OCI-LY7 (cell line): ENCODE measurements at regions of chr1 and their contacts with region 1.

Region 1: GRCh38 chr1:113401067-113401466 is 10.8 kb downstream of the MAGI3 start:
- DNase-seq: no peak
- H3K4me3 ChIP-seq: no peak overlapping the region
- H3K27ac ChIP-seq: no peak overlapping the region
- H3K4me1 ChIP-seq: no peaks in the 10 kb centered on the region
- CTCF ChIP-seq: no peak

Region 2: DNA sequence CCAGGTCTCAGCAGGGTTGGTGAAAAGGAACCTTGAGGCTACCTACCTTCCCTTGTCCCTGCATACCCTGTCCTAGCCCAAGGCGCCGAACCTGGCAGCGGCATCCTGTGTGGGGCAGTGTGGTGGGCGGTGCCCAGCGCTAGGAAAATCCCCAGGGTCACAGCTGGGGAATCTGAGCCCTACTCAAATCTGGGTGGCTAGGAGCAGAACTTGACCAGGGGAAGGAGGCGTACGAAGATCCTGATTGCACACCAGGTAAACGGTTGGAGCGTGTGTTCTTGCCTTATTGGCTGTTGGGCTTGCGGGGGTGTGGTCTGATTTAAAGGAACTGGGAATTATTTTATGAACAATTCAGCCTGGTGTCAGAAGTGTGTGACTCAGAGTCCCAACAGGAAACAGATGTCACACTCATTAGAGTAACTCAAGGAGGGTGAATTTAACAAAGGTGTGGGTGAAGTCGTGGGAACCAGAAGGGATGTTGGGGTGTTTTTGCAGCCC is 209.4 kb before region 1 on chr1:
- CTCF ChIA-PET with region 1: no interaction called
- POLR2A ChIA-PET with region 1: no interaction called
- intact Hi-C with region 1: no loop called
- DNase-seq: no peak
- H3K4me3 ChIP-seq: no peak overlapping the region
- H3K27ac ChIP-seq: no peak overlapping the region
- H3K4me1 ChIP-seq: no peaks in the 10 kb centered on the region
- CTCF ChIP-seq: no peak

Region 3: GRCh38 chr1:113389953-113390834 is 10.9 kb before region 1 on chr1 and contains the start of gene MAGI3:
- CTCF ChIA-PET with region 1: no interaction called
- POLR2A ChIA-PET with region 1: interaction called, 12 read pairs
- intact Hi-C with region 1: no loop called
- DNase-seq: peak; percentile 94
- H3K4me3 ChIP-seq: peak within 1 kb of the TSS; percentile 85
- H3K27ac ChIP-seq: peak within 1 kb of the TSS; percentile 24
- H3K4me1 ChIP-seq: peaks cover 18% of the 10 kb centered on the region
- CTCF ChIP-seq: no peak
- total RNA-seq, gene MAGI3: 2.9 and 4.7 TPM in 2 replicates